ENCODE measurements at regions of chr7 and their contacts with region 1.

Region 1: GRCh38 chr7:48299580-48300169 is 128.4 kb downstream of the ABCA13 start:
- DNase-seq: peak in 1 of 2 experiments; percentile 48
- H3K4me3 ChIP-seq: no peak overlapping the region
- H3K27ac ChIP-seq: no peak overlapping the region
- H3K4me1 ChIP-seq: no peaks in the 10 kb centered on the region
- H3K27me3 ChIP-seq: peaks cover 35% of the 10 kb centered on the region
- CTCF ChIP-seq: peak; percentile 88

Region 2: GRCh38 chr7:48365010-48365409 is 65.3 kb after region 1 on chr7:
- CTCF ChIA-PET with region 1: no interaction called
- POLR2A ChIA-PET with region 1: no interaction called
- intact Hi-C with region 1: no loop called
- DNase-seq: no peak
- H3K4me3 ChIP-seq: no peak overlapping the region
- H3K27ac ChIP-seq: no peak overlapping the region
- H3K4me1 ChIP-seq: no peaks in the 10 kb centered on the region
- H3K27me3 ChIP-seq: no peaks in the 10 kb centered on the region
- CTCF ChIP-seq: no peak

Region 3: DNA sequence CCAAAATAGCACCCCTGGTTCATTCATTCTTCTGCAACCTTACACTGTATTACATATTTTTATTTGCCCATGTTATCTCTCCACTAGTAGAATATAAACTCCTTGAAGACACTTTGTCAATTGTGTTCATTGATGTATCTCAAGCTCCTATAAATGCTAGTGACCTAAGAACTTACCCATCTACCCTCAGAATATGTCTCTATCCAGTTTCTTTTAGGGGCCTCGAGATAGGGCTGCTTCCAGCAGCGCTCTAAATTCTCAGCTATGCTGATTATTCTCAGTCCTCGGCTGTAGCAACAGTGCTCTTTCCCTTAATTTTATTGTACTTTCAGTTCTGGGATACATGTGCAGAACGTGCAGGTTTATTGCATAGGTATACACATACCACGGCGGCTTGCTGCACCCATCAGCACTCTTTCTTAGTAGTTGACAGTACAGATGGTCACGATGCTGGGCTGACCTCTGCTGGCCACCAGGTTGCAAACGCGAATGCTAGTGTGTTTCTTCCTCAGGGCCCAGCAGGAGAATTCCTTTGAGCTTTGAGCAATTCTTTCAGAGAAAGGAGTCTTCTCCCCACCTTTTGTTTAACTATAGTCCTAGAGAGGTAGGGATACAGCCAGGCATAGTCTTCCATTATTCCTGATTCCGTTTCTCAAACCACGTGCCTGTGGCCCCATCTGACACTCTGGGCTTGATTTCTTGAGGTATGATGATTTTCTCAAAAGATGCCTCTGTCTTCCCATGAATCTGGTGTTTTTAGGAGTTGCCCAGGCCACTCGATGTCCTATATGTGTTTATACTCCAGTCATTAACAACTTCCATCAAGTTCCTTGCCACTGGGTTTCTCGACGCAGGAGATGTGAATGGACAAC is 575.6 kb after region 1 on chr7:
- CTCF ChIA-PET with region 1: no interaction called
- POLR2A ChIA-PET with region 1: no interaction called
- intact Hi-C with region 1: loop called (anchors 1 kb)
- DNase-seq: peak in 1 of 2 experiments; percentile 30
- H3K4me3 ChIP-seq: no peak overlapping the region
- H3K27ac ChIP-seq: no peak overlapping the region
- H3K4me1 ChIP-seq: no peaks in the 10 kb centered on the region
- H3K27me3 ChIP-seq: no peaks in the 10 kb centered on the region
- CTCF ChIP-seq: peak; percentile 64

Region 4: DNA sequence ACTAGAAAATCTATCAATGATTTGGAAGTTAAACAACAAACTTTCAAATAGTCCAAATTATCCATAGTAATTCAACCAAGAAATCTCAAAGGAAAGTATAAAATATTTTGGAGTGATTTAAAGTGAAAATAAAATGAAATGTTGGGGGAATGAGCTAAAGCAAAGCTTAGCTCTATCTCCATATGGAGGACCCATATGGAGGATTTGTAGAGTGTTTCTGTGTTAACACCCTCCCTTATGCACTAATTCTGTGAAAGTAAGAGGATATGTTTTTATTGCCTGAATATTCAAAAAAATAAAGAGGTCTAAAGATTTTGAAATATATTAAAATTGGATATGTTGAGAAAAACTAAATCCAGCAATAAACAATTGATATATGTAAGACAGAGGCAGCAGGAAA is 656.2 kb after region 1 on chr7:
- CTCF ChIA-PET with region 1: no interaction called
- POLR2A ChIA-PET with region 1: no interaction called
- intact Hi-C with region 1: no loop called
- DNase-seq: no peak
- H3K4me3 ChIP-seq: no peak overlapping the region
- H3K27ac ChIP-seq: no peak overlapping the region
- H3K4me1 ChIP-seq: no peaks in the 10 kb centered on the region
- H3K27me3 ChIP-seq: 0 out of 2 replicates have a peak, but pooled peaks cover 10% of the 10 kb centered on the region
- CTCF ChIP-seq: no peak

Region 5: GRCh38 chr7:49852619-49853462 is 1553.2 kb after region 1 on chr7:
- CTCF ChIA-PET with region 1: no interaction called
- POLR2A ChIA-PET with region 1: no interaction called
- intact Hi-C with region 1: loop called (anchors 1 kb)
- DNase-seq: peak; percentile 35 to 54
- H3K4me3 ChIP-seq: no peak overlapping the region
- H3K27ac ChIP-seq: no peak overlapping the region
- H3K4me1 ChIP-seq: no peaks in the 10 kb centered on the region
- H3K27me3 ChIP-seq: peaks cover 24% of the 10 kb centered on the region
- CTCF ChIP-seq: peak; percentile 92

Measured in PC-9 (cell line).